ENCODE measurements at regions of chr13 and their contacts with region 1.

Region 1: GRCh38 chr13:110306960-110307746 is at the starts of genes COL4A1 and COL4A2:
- DNase-seq: no peak
- H3K4me3 ChIP-seq: peak within 1 kb of the TSS; percentile 87
- H3K27ac ChIP-seq: peak within 1 kb of the TSS; percentile 77
- H3K27me3 ChIP-seq: no peaks in the 10 kb centered on the region
- CTCF ChIP-seq: no peak
- polyA plus RNA-seq, gene COL4A1: 206 and 210 TPM in 2 replicates
- polyA plus RNA-seq, gene COL4A2: 208 and 248 TPM in 2 replicates

Region 2: GRCh38 chr13:110225609-110226562 is 81.3 kb before region 1 on chr13:
- CTCF ChIA-PET with region 1: interaction called, 9 read pairs
- POLR2A ChIA-PET with region 1: interaction called, 11 read pairs
- DNase-seq: no peak
- H3K4me3 ChIP-seq: no peak overlapping the region
- H3K27ac ChIP-seq: peak overlapping the region; percentile 52
- H3K27me3 ChIP-seq: no peaks in the 10 kb centered on the region
- CTCF ChIP-seq: no peak

Region 3: GRCh38 chr13:110290826-110291225 is 16.3 kb before region 1 on chr13:
- CTCF ChIA-PET with region 1: no interaction called
- POLR2A ChIA-PET with region 1: no interaction called
- DNase-seq: no peak
- H3K4me3 ChIP-seq: no peak overlapping the region
- H3K27ac ChIP-seq: no peak overlapping the region
- H3K27me3 ChIP-seq: no peaks in the 10 kb centered on the region
- CTCF ChIP-seq: no peak

Region 4: DNA sequence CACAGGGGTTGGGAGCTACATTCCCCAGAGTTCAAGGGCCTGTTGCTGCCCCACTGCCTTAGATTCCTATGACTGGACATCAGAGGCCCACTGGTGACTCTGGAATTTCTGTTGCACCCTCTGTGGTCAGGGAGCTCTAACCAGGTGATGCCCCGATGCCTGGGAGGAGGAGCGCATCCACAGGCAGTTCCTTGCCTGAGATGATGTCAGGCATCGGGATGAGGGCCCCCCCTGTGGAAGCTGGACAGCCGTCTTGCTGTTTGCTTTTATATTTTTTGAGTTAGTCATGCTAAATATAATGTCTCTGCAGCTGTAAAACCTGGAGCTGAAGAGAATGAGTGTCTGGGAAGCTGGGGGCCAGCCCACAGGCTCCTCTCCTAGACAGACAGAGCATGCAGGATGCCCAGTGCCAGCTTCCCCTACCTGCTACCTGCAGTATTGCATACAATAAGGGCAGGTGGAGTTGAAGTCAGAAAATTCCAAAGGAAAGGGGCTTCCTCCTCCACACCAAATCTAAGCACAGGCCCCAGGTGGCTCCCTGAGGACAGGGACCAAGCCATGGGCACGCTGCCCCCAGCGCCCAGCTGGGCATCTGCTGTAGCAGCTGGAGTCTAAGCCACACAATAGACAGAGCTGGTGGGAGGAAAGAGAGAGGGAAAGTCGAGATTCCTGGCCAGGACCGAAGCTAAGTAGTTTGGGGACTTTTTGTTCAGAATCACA is 16.2 kb after region 1 on chr13:
- CTCF ChIA-PET with region 1: no interaction called
- POLR2A ChIA-PET with region 1: interaction called, 18 read pairs
- DNase-seq: peak; percentile 81
- H3K4me3 ChIP-seq: no peak overlapping the region
- H3K27ac ChIP-seq: peak overlapping the region; percentile 75
- H3K27me3 ChIP-seq: no peaks in the 10 kb centered on the region
- CTCF ChIP-seq: peak; percentile 34; the same call in 1 of the 2 replicates

Region 5: DNA sequence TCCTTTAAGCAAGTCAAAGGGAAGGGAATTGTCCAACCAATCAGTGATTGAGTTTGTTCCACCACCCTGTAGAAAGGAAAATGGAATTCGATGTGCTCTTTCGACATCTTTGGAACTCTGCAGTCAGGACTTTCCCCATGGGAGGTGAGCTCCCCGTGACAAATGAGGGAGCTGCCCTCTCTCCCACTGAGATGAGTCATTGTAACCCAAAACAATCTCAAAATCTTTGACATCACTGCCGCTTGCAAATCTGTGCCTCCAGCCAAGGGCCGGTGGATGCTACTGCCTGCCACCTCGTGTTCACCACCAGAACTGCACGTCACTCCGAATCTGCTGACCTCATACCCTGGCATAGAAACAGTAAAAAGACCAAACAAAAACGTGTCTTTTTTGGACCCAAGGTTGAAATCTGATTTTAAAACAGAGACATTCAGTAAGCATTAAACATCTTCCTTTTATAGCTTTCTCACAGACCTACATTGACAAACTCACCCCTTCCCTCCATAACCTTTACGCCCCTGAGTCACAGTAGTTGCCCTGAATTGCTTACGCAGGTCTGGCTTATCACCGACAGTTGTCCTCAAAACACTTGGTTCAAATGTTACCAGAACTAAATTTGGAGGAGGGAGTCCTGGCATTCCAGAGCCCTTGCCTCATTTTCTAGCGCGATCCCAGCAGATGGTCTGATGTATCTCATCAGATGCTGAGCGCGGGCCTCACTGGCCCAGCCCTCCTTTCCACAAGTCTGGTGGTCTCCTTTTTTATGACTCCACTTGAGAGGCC is 105.2 kb after region 1 on chr13:
- CTCF ChIA-PET with region 1: interaction called, 4 read pairs
- POLR2A ChIA-PET with region 1: interaction called, 11 read pairs
- DNase-seq: peak; percentile 98
- H3K4me3 ChIP-seq: no peak overlapping the region
- H3K27ac ChIP-seq: peak overlapping the region; percentile 61
- H3K27me3 ChIP-seq: no peaks in the 10 kb centered on the region
- CTCF ChIP-seq: peak; percentile 97

Measured in AG04450 (cell line).